GM18951 (cell line): ENCODE measurements at regions of chr2 and their contacts with region 1.

Region 1: DNA sequence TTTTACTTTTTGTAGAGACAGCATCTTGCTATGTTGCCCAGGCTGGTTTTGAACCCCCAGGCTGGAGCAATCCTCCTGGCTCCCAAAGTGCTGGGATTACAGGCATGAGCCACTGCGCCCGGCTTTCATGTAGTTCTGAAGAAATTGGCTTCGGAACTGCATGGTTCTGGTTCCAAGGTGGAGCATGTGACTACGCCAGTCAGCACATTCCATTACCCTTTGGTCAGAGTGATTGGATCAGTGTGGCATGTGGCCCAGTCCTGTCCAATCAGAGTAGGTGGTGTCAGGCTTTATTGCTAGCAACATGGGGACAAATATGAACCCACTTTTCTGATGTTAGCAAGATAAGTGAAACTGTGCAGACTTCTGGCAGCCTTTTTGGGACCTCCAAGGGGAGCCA is 16.3 kb upstream of the ATOH8 start:
- POLR2A ChIP-seq: no peak

Region 2: GRCh38 chr2:85628658-85629057 is 108.8 kb before region 1 on chr2:
- in situ Hi-C with region 1: no loop called
- POLR2A ChIP-seq: no peak

Region 3: GRCh38 chr2:85813982-85814801 is 76.7 kb after region 1 on chr2:
- in situ Hi-C with region 1: loop called (anchors 5 kb)
- POLR2A ChIP-seq: no peak